Activated CD4-positive, alpha-beta T cell treated with anti-CD3 and anti-CD28 coated beads for 36 hours (primary cell): ENCODE measurements at regions of chr7 and their contacts with region 1.

Region 1: GRCh38 chr7:150716368-150716767 is at the start of gene GIMAP1:
- DNase-seq: peak; percentile 72
- ATAC-seq: peak; percentile 75
- H3K4me3 Mint-ChIP-seq: peak within 1 kb of the TSS; percentile 95
- H3K27ac Mint-ChIP-seq: peak within 1 kb of the TSS; percentile 99
- H3K4me1 Mint-ChIP-seq: peaks cover 50% of the 10 kb centered on the region
- H3K27me3 Mint-ChIP-seq: no peaks in the 10 kb centered on the region
- total RNA-seq, gene GIMAP1: 3.5 to 5.5 TPM

Region 2: DNA sequence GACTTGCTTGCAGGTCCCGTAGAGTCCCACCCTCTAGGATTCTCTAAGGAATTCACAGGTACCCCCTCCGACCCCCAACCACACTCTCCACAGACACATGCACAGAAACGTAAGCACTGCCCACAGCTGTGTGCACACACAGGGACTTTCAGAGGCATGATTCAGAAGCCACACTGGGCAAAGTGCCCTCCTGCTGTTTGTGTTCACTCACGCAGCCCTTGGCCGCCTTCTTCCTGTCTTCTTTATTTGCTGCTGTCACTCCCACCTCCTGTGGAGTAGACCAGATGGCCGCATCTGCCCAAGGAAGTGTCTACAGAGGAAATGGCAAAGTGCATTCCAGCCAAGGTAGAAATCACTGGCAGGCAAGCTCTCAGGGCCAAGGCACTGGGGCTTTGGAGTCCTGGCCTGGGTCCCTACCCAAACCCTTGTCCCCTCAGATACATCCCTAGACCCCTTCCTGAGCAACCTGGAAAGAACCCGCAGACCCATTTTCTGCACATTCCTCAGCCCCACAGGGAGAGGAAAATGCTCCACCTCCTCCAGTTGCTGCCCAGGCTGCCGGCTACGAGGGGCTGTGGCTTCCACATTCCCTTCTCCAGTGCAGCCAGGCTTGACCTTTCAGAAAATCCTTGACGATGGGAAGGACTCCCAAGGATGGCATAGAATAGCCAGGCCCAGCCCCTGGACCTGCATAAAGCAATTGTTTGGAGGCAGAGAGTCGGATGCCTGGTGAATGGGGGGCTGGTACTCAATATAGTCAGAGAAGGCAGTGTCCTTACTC is 287.5 kb before region 1 on chr7:
- CTCF ChIA-PET with region 1: no interaction called
- POLR2A ChIA-PET with region 1: no interaction called
- intact Hi-C with region 1: no loop called
- DNase-seq: peak; percentile 44
- ATAC-seq: peak; percentile 81
- H3K4me3 Mint-ChIP-seq: no peak overlapping the region
- H3K27ac Mint-ChIP-seq: no peak overlapping the region
- H3K4me1 Mint-ChIP-seq: peaks cover 10% of the 10 kb centered on the region
- H3K27me3 Mint-ChIP-seq: peaks cover 3% of the 10 kb centered on the region

Region 3: GRCh38 chr7:150538259-150538658 is 178.1 kb before region 1 on chr7:
- CTCF ChIA-PET with region 1: no interaction called
- POLR2A ChIA-PET with region 1: no interaction called
- intact Hi-C with region 1: no loop called
- DNase-seq: no peak
- ATAC-seq: no peak
- H3K4me3 Mint-ChIP-seq: no peak overlapping the region
- H3K27ac Mint-ChIP-seq: no peak overlapping the region
- H3K4me1 Mint-ChIP-seq: peaks cover 9% of the 10 kb centered on the region
- H3K27me3 Mint-ChIP-seq: no peaks in the 10 kb centered on the region

Region 4: DNA sequence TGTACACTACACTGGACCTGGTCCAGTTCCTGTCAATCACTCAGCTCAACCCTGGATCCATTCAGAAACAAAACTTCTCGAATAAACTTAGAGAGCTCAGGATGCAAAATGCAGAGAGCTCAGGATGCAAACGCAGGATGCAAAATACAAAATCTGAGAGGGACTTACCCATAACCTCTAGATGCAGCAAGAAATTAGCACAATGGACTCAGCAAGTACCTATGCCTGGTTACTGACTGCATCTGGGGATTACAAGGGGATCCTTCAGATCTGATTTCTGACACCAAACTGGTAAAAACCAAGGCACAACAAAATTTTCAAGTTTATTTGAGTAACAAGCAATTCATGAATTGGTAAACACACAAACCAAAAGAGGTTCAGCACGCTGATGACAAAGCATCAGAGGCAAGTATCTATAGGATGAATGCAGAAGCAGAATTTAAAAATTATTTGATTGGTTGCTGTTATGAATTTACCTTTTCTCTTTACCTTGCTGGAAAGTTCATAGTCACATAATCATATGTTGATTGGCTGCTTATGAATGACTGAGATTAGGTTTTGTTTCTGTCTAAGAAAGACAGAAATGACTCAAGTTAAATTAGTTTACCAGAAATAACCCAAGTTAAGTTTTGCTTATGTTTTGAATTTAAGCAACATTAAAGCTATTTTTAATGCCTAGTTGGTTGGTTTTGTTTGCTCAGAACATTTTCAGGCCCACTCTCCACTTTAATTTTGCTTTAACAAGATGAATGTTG is 95.6 kb before region 1 on chr7:
- CTCF ChIA-PET with region 1: interaction called, 9 read pairs
- POLR2A ChIA-PET with region 1: no interaction called
- intact Hi-C with region 1: loop called in 1 of 2 experiments (anchors 5 kb)
- DNase-seq: no peak
- ATAC-seq: peak; percentile 75
- H3K4me3 Mint-ChIP-seq: no peak overlapping the region
- H3K27ac Mint-ChIP-seq: peak overlapping the region; percentile 79
- H3K4me1 Mint-ChIP-seq: peaks cover 53% of the 10 kb centered on the region
- H3K27me3 Mint-ChIP-seq: no peaks in the 10 kb centered on the region

Region 5: GRCh38 chr7:150685219-150686029 is 30.9 kb before region 1 on chr7 and contains the start of gene GIMAP2:
- CTCF ChIA-PET with region 1: interaction called, 14 read pairs
- POLR2A ChIA-PET with region 1: interaction called, 4 read pairs
- intact Hi-C with region 1: no loop called
- DNase-seq: peak; percentile 41
- ATAC-seq: peak; percentile 85
- H3K4me3 Mint-ChIP-seq: peak within 1 kb of the TSS; percentile 96
- H3K27ac Mint-ChIP-seq: peak within 1 kb of the TSS; percentile 100
- H3K4me1 Mint-ChIP-seq: peaks cover 75% of the 10 kb centered on the region
- H3K27me3 Mint-ChIP-seq: no peaks in the 10 kb centered on the region
- total RNA-seq, gene GIMAP2: 30.0 to 40.1 TPM

Region 6: GRCh38 chr7:150703209-150703608 is 13.2 kb before region 1 on chr7:
- CTCF ChIA-PET with region 1: interaction called, 11 read pairs
- POLR2A ChIA-PET with region 1: no interaction called
- intact Hi-C with region 1: no loop called
- DNase-seq: no peak
- ATAC-seq: no peak
- H3K4me3 Mint-ChIP-seq: no peak overlapping the region
- H3K27ac Mint-ChIP-seq: no peak overlapping the region
- H3K4me1 Mint-ChIP-seq: peaks cover 2% of the 10 kb centered on the region
- H3K27me3 Mint-ChIP-seq: no peaks in the 10 kb centered on the region

Region 7: GRCh38 chr7:152120210-152120609 is 1403.8 kb after region 1 on chr7:
- CTCF ChIA-PET with region 1: no interaction called
- POLR2A ChIA-PET with region 1: no interaction called
- intact Hi-C with region 1: no loop called
- DNase-seq: no peak
- ATAC-seq: no peak
- H3K4me3 Mint-ChIP-seq: no peak overlapping the region
- H3K27ac Mint-ChIP-seq: no peak overlapping the region
- H3K4me1 Mint-ChIP-seq: peaks cover 10% of the 10 kb centered on the region
- H3K27me3 Mint-ChIP-seq: no peaks in the 10 kb centered on the region